Posterior cingulate gyrus (tissue), 11 donors: ENCODE measurements at regions of chr3 and their contacts with region 1.

Region 1: GRCh38 chr3:101573449-101574387 is at the start of gene PCNP:
- DNase-seq: peak; percentile 98 to 100 (median 99)

Region 2: DNA sequence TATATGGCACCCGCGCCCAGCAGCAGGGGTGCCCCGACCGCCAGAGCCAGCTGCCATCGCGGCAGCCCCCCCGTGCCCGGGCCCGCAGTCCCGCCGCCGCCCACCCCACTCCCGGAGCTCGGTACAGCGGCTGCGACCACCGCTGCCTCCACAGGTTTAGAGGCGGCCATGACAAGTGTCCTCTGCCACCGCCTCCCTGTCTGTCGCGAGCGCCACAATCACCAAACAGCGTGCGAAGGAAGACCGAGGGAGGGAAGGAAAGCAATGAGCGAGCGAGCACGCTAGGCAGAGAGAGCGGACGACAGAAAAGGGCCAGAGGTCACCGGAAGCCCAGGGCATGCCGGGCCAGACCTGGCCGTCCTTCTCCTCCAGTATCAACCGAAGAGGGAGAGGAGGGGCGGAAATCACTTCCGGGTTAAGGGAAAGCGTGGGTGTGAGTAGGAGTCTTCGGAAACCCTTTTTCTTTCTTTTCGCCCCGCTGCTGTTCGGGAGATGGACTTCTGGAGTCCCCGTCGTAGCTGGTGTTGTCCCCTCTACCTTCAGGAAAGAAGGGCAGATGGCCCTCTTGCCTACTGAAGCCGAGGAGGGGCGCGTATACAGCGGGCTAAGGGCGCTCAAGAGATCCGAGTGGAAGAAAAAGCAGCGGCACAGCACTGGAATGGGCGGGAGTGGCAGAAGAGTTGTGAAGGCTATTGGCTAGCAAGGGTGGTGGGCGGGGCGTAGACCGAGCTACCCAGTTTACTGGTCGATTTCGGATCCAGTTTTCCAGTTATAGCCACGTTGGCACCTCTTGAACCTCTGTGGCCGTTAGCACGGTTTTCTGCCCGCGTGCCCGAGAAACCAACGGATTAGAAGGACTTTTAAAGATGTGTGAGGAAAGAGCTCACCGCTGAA is 1172.7 kb before region 1 on chr3 and contains the starts of genes LNP1 and TOMM70:
- intact Hi-C with region 1: loop called (anchors 5 kb)
- DNase-seq: peak; percentile 94 to 99 (median 97)

Region 3: DNA sequence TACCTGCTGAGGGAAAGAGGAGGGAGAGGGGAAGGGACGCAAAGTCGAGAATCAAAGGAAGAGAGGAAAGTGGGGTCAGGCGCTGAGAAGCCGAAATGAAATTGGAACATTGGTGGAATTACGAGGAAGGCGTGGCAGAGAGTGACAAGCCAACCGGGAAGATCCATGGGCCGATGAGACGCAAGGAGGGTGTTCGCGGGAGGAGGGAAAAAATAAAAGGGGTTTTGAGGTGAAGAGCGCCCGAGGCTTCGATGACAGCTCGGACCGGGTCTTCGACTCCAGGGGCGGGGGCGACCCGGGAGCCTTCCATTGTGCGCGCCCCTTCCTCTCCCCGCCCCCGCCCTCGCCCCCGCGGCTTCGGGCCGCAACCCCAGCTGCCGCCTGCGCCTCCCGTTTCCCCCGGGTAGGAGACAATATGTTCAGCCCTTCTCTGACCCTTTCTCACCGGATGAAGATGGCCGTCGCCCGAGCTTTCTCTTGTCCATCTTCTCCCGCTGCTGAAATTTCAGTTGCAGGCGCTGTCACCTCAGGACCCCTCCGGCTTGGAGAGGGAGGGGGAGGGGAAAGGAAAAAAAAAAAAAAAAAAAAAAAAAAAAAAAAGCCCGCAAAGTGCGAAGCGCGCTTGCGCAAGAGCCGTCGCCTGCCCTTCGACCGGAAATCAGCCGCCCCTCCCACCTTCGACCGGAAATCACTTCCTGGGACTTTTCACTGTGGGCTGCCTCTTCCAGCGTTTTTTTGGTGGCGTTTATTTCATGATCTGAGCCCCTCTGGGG is 60.9 kb before region 1 on chr3 and contains the start of gene SENP7:
- intact Hi-C with region 1: loop called (anchors 5 kb)
- DNase-seq: peak; percentile 62 to 95 (median 78)

Region 4: DNA sequence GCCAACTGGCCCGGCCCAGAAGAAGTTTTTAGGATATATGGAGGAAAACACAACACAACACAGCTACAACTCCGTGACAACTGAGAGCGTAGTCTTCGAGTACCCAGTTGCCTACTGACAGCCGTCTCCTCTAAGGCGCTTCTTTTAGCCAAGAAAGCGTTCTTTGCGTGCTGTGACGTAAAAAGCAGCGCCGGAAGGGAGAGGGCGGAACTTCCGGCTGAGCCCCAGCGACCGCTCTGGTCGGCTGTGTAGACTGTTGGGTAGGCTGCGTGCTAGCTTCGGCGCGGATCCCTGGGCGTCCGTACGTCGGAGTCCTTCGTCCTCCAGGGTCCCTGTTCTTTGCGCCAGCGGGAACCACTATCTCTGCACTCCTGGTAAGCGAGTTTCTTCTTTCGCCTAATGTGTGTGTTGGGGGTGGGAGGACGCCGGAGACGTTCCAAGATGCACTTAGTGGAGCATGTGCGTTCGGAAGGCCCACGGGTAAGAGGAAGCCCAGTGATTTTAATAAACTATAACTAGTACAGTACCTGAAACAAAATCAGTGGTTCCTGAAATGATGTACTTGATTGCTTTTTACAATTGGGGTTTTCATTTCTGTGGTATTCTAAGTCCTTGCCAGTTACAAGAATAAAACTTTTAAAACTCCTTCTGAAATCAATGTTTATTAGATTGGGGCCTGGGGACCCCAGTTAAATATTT is 11.9 kb before region 1 on chr3 and contains the start of gene TRMT10C:
- intact Hi-C with region 1: loop called (anchors 1 kb)
- DNase-seq: peak; percentile 89 to 99 (median 94)

Region 5: DNA sequence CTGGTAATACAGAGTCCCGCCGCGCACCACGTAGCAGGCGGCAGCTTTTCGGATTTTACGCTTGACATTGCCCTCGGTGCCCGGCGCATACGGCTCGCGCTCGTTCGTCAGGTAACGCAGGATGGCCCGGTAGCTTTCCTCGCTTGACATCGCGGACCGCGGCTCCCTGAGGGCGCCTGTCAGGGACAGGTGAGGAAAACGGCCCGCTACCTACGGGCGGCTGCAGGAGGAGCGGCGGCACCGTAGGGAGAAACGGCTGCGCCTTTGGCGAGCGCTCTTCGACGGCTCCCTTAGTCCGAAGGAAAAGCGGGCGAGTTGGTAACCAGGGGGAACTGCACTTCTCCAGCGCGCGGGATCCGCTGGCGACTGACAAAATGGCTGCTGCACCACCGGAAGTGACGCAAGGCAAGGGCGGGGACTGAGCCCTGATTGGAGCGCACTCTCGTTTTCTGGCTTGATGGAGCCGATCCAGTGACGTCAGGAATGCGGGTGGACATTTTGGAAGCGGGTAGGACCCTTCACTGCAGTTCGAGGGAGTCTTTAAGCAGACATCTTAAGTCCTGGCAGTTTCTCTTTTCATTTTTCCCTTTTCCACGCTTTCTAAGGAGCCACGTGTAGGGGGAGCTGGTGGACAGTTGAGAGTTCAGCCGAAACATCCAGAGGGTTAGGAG is 103.2 kb after region 1 on chr3 and contains the start of gene ZBTB11:
- intact Hi-C with region 1: loop called (anchors 5 kb)
- DNase-seq: peak; percentile 99 to 100 (median 100)